IMR-90 (cell line): ENCODE measurements at regions of chr6 and their contacts with region 1.

Region 1: GRCh38 chr6:43170417-43171283 is at the start of gene SRF:
- DNase-seq: peak; percentile 99
- ATAC-seq: peak; percentile 67
- H3K4me3 ChIP-seq: peak within 1 kb of the TSS; percentile 73
- H3K27ac ChIP-seq: peak within 1 kb of the TSS; percentile 97
- H3K4me1 ChIP-seq: peaks cover 12% of the 10 kb centered on the region
- H3K27me3 ChIP-seq: no peaks in the 10 kb centered on the region
- CTCF ChIP-seq: no peak
- POLR2A ChIP-seq: peak; percentile 56; the same call in 1 of the 2 replicates
- RAD21 ChIP-seq: no peak; the same call in 1 of the 2 replicates
- total RNA-seq, gene SRF: 20.6 TPM in 2 replicates

Region 2: GRCh38 chr6:43035495-43036194 is 135.0 kb before region 1 on chr6:
- CTCF ChIA-PET with region 1: no interaction called
- POLR2A ChIA-PET with region 1: interaction called, 14 read pairs
- dilution Hi-C with region 1: no loop called
- in situ Hi-C with region 1: no loop called
- intact Hi-C with region 1: no loop called
- DNase-seq: no peak
- ATAC-seq: no peak
- H3K4me3 ChIP-seq: no peak overlapping the region
- H3K27ac ChIP-seq: no peak overlapping the region
- H3K4me1 ChIP-seq: no peaks in the 10 kb centered on the region
- H3K27me3 ChIP-seq: no peaks in the 10 kb centered on the region
- CTCF ChIP-seq: no peak
- POLR2A ChIP-seq: no peak
- RAD21 ChIP-seq: no peak

Region 3: GRCh38 chr6:43506667-43507471 is 336.2 kb after region 1 on chr6:
- CTCF ChIA-PET with region 1: no interaction called
- POLR2A ChIA-PET with region 1: no interaction called
- dilution Hi-C with region 1: no loop called
- in situ Hi-C with region 1: no loop called
- intact Hi-C with region 1: no loop called
- DNase-seq: peak; percentile 78
- ATAC-seq: peak; percentile 58
- H3K4me3 ChIP-seq: no peak overlapping the region
- H3K27ac ChIP-seq: no peak overlapping the region
- H3K4me1 ChIP-seq: peaks cover 4% of the 10 kb centered on the region
- H3K27me3 ChIP-seq: no peaks in the 10 kb centered on the region
- CTCF ChIP-seq: peak; percentile 98
- POLR2A ChIP-seq: 0 out of 2 replicates have a peak, but pooled peaks have one; percentile 30
- RAD21 ChIP-seq: peak; percentile 94

Region 4: DNA sequence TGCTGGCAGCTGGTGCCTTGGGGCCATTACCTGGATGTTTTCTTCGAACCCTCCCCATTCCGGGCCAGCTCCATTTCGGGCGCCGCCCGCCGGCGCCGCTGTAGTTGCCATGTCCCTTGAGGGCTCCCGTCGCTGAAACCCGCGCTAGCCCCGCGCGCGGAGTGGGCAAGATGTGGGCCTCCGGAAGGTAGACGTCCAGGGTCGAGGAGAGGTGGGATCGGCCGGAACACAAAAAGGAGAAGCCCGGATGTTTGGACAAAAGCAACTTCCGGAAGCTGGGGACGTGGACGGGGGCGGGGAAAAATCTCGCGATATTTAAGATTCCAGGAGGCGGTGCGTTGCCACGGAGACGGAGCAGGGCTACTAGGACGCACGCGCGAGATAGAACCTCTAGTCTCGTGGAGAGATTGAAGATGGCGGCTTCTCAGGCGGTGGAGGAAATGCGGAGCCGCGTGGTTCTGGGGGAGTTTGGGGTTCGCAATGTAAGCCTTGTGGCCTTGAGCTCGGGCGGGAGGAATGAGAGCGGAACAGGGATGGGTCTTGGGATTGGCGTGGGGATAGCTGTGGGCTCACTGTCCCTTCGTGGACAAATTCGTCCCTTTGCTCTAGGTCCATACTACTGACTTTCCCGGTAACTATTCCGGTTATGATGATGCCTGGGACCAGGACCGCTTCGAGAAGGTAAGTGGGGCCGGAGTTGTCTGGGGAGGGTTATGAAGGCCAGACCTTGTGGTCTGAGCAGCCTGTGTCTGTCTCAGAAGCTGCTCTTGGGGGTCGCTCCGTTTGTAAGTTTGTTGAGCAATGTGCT is 346.3 kb after region 1 on chr6 and contains the starts of genes POLR1C and YIPF3:
- CTCF ChIA-PET with region 1: no interaction called
- POLR2A ChIA-PET with region 1: no interaction called
- dilution Hi-C with region 1: no loop called
- in situ Hi-C with region 1: no loop called
- intact Hi-C with region 1: no loop called
- DNase-seq: peak; percentile 97
- ATAC-seq: peak; percentile 91
- H3K4me3 ChIP-seq: peak within 1 kb of the TSS; percentile 80
- H3K27ac ChIP-seq: peak within 1 kb of the TSS; percentile 83
- H3K4me1 ChIP-seq: peaks cover 10% of the 10 kb centered on the region
- H3K27me3 ChIP-seq: no peaks in the 10 kb centered on the region
- CTCF ChIP-seq: no peak
- POLR2A ChIP-seq: peak; percentile 90
- RAD21 ChIP-seq: no peak
- total RNA-seq, gene POLR1C: 69.4 and 72.6 TPM in 2 replicates
- total RNA-seq, gene YIPF3: 114 and 120 TPM in 2 replicates